Activated CD4-positive, alpha-beta T cell treated with anti-CD3 and anti-CD28 coated beads for 36 hours (primary cell): ENCODE measurements at regions of chrX and their contacts with region 1.

Region 1: DNA sequence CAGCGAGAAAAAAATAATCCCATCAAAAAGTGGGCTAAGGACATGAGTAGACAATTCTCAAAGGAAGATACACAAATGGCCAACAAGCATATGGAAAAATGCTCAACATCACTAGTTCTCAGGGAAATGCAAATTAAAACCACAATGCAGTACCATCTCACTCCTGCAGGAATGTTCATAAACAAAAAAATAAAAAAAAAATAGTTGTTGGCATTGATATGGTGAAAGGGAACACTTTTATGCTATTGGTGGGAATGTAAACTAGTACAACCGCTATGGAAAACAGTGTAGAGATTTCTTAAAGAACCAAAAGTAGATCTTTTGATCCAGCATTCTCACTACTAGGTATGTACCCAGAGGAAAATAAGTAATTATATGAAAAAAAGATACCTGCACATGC is 508.3 kb upstream of the MAGEB2 start:
- DNase-seq: no peak
- ATAC-seq: no peak
- H3K4me3 Mint-ChIP-seq: no peak overlapping the region
- H3K27ac Mint-ChIP-seq: no peak overlapping the region
- H3K4me1 Mint-ChIP-seq: no peaks in the 10 kb centered on the region
- H3K27me3 Mint-ChIP-seq: no peaks in the 10 kb centered on the region

Region 2: DNA sequence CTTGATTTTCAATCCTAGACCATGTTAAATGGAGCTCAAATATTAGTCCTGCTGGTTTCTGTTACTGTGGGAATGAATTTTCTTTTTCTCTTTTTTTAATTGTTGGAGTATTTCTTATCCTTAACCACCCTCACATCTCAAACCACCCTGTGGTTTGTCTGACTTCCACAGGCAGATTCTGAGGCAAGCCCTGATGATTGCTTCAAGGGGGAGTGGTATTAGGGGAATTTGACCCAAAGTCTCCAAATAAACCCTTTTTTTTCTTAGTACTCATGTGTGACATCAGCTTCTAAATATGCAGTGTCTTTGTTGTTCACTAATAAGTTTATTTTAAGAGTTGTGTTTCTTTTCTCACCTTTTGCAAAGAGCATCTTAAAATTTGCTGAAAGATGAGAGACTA is 309.6 kb before region 1 on chrX:
- CTCF ChIA-PET with region 1: no interaction called
- POLR2A ChIA-PET with region 1: no interaction called
- intact Hi-C with region 1: no loop called
- DNase-seq: no peak
- ATAC-seq: no peak
- H3K4me3 Mint-ChIP-seq: no peak overlapping the region
- H3K27ac Mint-ChIP-seq: no peak overlapping the region
- H3K4me1 Mint-ChIP-seq: no peaks in the 10 kb centered on the region
- H3K27me3 Mint-ChIP-seq: no peaks in the 10 kb centered on the region

Region 3: GRCh38 chrX:29447869-29448268 is 259.2 kb before region 1 on chrX:
- CTCF ChIA-PET with region 1: no interaction called
- POLR2A ChIA-PET with region 1: no interaction called
- intact Hi-C with region 1: no loop called
- DNase-seq: no peak
- ATAC-seq: no peak
- H3K4me3 Mint-ChIP-seq: no peak overlapping the region
- H3K27ac Mint-ChIP-seq: no peak overlapping the region
- H3K4me1 Mint-ChIP-seq: no peaks in the 10 kb centered on the region
- H3K27me3 Mint-ChIP-seq: no peaks in the 10 kb centered on the region

Region 4: DNA sequence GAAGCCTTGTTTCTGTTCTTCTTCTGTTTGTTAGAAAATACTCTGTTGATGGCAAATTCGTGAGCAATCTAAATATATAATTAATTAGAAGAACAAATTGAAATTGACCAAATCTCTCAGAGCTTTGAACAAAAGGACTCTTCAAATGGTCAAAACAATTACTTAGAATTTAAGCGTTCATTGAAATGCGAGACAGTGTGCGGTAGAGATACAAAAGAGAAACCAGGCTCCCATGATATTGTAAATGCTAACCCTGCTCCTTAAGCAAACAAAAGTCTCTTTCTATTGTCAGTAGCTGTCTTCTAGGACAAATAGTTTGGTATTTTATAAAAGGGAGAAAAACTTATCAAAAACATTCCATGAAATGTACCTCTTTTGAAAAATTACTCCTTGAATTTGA is 54.9 kb after region 1 on chrX:
- CTCF ChIA-PET with region 1: no interaction called
- POLR2A ChIA-PET with region 1: no interaction called
- intact Hi-C with region 1: loop called in 1 of 2 experiments (anchors 10 kb)
- DNase-seq: no peak
- ATAC-seq: no peak
- H3K4me3 Mint-ChIP-seq: no peak overlapping the region
- H3K27ac Mint-ChIP-seq: no peak overlapping the region
- H3K4me1 Mint-ChIP-seq: no peaks in the 10 kb centered on the region
- H3K27me3 Mint-ChIP-seq: no peaks in the 10 kb centered on the region

Region 5: GRCh38 chrX:29965634-29966033 is 258.5 kb after region 1 on chrX:
- CTCF ChIA-PET with region 1: no interaction called
- POLR2A ChIA-PET with region 1: no interaction called
- intact Hi-C with region 1: no loop called
- DNase-seq: no peak
- ATAC-seq: no peak
- H3K4me3 Mint-ChIP-seq: no peak overlapping the region
- H3K27ac Mint-ChIP-seq: no peak overlapping the region
- H3K4me1 Mint-ChIP-seq: no peaks in the 10 kb centered on the region
- H3K27me3 Mint-ChIP-seq: no peaks in the 10 kb centered on the region